GM12878 (cell line): ENCODE measurements at regions of chr1 and their contacts with region 1.

Region 1: DNA sequence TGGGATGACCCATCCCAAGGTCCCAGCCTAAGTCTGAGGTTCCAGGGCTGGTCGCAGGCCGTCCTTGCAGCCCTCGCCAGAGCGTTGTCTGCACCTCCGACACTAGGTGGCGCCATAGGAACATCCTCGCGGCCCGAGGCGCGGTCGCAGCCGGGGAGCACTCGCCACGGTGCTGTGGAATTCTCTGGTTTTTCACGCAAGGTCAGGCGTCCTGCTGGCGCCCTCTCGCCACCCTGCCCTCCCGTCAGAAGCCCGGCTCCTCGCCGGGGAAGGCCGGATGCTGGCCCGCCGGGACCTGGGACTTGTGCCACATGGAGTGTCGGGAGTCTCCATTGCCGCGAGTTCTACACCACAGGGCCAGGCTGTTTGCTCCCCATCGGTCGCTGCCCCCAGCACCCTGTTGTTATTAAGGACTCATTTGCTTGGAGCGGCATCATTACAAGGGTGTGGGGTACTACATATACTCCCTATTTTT is 196.8 kb upstream of the LMO4 start:
- DNase-seq: no peak
- ATAC-seq: peak; percentile 99
- H3K4me3 ChIP-seq: peak overlapping the region; percentile 74; the same call in 1 of the 2 replicates
- H3K27ac ChIP-seq: no peak overlapping the region
- H3K4me1 ChIP-seq: no peaks in the 10 kb centered on the region
- H3K27me3 ChIP-seq: no peaks in the 10 kb centered on the region
- CTCF ChIP-seq: peak; percentile 92 to 94 (median 92); a peak in 5 of 6 replicates
- EP300 ChIP-seq: no peak
- POLR2A ChIP-seq: no peak
- RAD21 ChIP-seq: peak; percentile 95

Region 2: GRCh38 chr1:86183810-86184209 is 948.0 kb before region 1 on chr1:
- CTCF ChIA-PET with region 1: no interaction called
- POLR2A ChIA-PET with region 1: no interaction called
- RAD21 ChIA-PET with region 1: no interaction called
- SMC1A ChIA-PET with region 1: no interaction called
- in situ Hi-C with region 1: no loop called
- intact Hi-C with region 1: no loop called
- DNase-seq: no peak
- ATAC-seq: no peak
- H3K4me3 ChIP-seq: no peak overlapping the region
- H3K27ac ChIP-seq: no peak overlapping the region
- H3K4me1 ChIP-seq: no peaks in the 10 kb centered on the region
- H3K27me3 ChIP-seq: no peaks in the 10 kb centered on the region
- CTCF ChIP-seq: no peak
- EP300 ChIP-seq: no peak
- POLR2A ChIP-seq: no peak
- RAD21 ChIP-seq: no peak

Region 3: DNA sequence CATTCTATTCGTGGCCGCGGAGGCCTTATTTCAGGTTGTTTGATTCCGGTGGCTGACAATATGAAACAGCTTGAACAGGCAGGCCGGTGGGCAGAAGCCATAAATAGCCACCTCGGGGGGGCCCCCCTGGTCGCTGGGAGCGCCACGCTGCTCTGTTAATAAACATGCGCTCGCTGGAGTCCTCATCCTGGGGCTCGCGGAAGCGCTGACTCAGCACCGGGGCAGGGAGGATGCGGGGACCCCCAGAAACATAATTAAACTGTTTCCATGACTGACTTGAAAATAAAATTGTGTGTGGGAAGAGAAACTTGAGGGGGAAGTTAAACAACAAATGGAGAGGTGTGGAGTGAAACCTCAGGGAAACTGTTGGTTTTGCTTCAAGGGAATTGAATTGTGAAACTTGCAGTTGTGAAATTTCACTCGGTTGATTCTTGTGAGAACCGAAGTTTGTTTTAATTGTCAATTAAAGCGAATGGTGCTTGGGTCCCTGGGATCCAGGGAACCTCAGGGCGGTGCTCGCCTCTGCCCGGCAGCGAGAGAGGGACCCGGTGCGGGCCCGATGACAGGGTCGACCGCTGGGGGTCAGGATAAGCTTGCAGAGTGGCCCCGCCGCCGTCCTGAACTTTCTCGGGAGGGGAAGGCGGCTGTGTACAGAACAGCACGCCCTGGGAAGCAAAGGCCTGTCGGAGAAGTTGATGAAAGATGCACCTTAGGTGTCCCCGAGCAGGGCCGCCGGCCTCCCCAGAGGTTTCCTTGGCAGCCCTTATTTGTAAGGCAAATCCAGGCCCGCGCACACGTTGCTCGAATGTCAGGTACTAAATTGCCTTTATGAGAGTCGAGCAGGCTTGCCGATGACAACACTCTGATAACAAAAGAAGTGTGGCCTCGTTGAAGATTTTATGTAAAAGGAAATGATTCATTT is 19.9 kb after region 1 on chr1:
- CTCF ChIA-PET with region 1: interaction called, 10 read pairs
- POLR2A ChIA-PET with region 1: no interaction called
- RAD21 ChIA-PET with region 1: interaction called, 5 read pairs
- SMC1A ChIA-PET with region 1: interaction called, 8 read pairs
- in situ Hi-C with region 1: no loop called
- intact Hi-C with region 1: loop called (anchors 1 kb)
- DNase-seq: peak; percentile 75
- ATAC-seq: peak; percentile 84
- H3K4me3 ChIP-seq: peak overlapping the region; percentile 47; the same call in 1 of the 2 replicates
- H3K27ac ChIP-seq: peak overlapping the region; percentile 13; the same call in 1 of the 2 replicates
- H3K4me1 ChIP-seq: peaks cover 17% of the 10 kb centered on the region
- H3K27me3 ChIP-seq: no peaks in the 10 kb centered on the region
- CTCF ChIP-seq: peak; percentile 52 to 82 (median 69)
- EP300 ChIP-seq: peak; percentile 6 to 10; a peak in 2 of 4 replicates
- POLR2A ChIP-seq: no peak
- RAD21 ChIP-seq: peak; percentile 67

Region 4: DNA sequence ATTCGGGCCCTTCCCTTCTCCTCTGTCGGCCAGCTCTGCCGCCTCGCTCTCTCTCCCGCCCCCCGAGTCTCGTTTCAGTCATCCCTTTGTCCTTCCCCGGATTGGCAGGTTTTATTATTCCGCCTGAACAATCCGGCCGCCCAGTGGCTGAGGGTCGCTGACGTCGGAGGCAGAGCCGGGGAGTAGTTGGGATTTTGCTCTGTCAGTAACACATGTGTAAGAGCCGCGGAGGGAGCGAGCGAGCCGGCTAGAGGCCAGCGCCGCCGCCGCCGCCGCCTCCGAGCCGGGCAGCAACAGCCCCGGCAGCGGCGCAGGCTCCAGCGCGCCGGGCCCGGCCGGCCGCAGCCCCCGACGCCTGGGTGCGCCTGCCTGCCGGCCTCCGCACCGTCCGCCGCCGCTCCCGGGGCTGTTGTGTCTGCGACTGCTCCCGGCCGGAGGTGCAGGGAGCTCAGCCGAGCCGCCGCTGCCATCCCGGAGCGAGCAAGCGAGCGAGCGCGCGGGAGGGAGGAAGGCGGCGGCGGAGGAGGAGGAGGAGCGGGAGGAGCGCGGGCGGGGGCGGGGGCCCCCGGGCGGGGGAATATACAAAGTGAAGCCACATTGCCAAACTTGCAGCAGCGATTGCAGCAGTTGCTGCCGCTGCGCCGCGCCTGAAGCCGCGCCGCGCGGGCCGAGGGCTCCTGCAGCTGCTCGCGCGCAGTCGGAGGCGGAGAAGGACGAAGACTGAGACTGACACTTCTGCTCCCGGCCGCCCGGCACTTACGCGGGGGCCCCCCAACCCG is 196.6 kb after region 1 on chr1 and contains the start of gene LMO4:
- CTCF ChIA-PET with region 1: interaction called, 4 read pairs
- POLR2A ChIA-PET with region 1: no interaction called
- RAD21 ChIA-PET with region 1: no interaction called
- SMC1A ChIA-PET with region 1: interaction called, 3 read pairs
- in situ Hi-C with region 1: no loop called
- intact Hi-C with region 1: loop called (anchors 5 kb)
- DNase-seq: peak; percentile 81
- ATAC-seq: peak; percentile 80
- H3K4me3 ChIP-seq: peak within 1 kb of the TSS; percentile 84
- H3K27ac ChIP-seq: peak within 1 kb of the TSS; percentile 65
- H3K4me1 ChIP-seq: no peaks in the 10 kb centered on the region
- H3K27me3 ChIP-seq: no peaks in the 10 kb centered on the region; a peak in 1 of 4 replicates
- CTCF ChIP-seq: no peak
- EP300 ChIP-seq: no peak
- POLR2A ChIP-seq: peak; percentile 85
- RAD21 ChIP-seq: no peak
- polyA plus RNA-seq, gene LMO4: 3.8 to 5.7 TPM

Region 5: DNA sequence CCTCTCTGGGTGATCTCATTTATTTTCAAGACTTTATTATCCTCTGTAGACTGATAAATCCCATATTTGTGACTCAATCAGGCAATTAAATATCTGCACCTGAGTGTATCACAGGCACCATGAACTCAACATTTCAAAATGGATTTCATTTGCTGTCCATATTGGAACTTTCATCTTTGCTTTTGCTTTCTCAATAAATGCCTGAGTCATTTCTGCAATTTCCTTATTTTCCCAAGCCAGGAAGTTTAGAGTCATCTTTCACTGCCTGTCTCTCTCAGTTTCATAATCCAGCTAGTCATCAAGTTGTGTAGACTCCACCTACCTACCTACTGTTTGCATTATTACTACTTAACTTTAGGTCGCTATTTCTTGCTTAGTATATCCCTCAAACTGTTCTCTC is 737.7 kb after region 1 on chr1:
- CTCF ChIA-PET with region 1: no interaction called
- POLR2A ChIA-PET with region 1: no interaction called
- RAD21 ChIA-PET with region 1: no interaction called
- SMC1A ChIA-PET with region 1: no interaction called
- in situ Hi-C with region 1: no loop called
- intact Hi-C with region 1: loop called (anchors 10 kb)
- DNase-seq: no peak
- ATAC-seq: no peak
- H3K4me3 ChIP-seq: no peak overlapping the region
- H3K27ac ChIP-seq: no peak overlapping the region
- H3K4me1 ChIP-seq: no peaks in the 10 kb centered on the region; the same call in 1 of the 2 replicates
- H3K27me3 ChIP-seq: no peaks in the 10 kb centered on the region
- CTCF ChIP-seq: no peak
- EP300 ChIP-seq: no peak
- POLR2A ChIP-seq: no peak
- RAD21 ChIP-seq: no peak

Region 6: GRCh38 chr1:88061492-88062177 is 929.8 kb after region 1 on chr1:
- CTCF ChIA-PET with region 1: no interaction called
- POLR2A ChIA-PET with region 1: no interaction called
- RAD21 ChIA-PET with region 1: no interaction called
- SMC1A ChIA-PET with region 1: no interaction called
- in situ Hi-C with region 1: no loop called
- intact Hi-C with region 1: loop called (anchors 2 kb)
- DNase-seq: no peak
- ATAC-seq: peak; percentile 87
- H3K4me3 ChIP-seq: no peak overlapping the region
- H3K27ac ChIP-seq: no peak overlapping the region
- H3K4me1 ChIP-seq: no peaks in the 10 kb centered on the region
- H3K27me3 ChIP-seq: no peaks in the 10 kb centered on the region
- CTCF ChIP-seq: peak; percentile 57 to 63 (median 58)
- EP300 ChIP-seq: no peak
- POLR2A ChIP-seq: no peak
- RAD21 ChIP-seq: peak; percentile 63